Right ventricle myocardium inferior (tissue), 1 donor: ENCODE measurements at regions of chr4 and their contacts with region 1.

Region 1: DNA sequence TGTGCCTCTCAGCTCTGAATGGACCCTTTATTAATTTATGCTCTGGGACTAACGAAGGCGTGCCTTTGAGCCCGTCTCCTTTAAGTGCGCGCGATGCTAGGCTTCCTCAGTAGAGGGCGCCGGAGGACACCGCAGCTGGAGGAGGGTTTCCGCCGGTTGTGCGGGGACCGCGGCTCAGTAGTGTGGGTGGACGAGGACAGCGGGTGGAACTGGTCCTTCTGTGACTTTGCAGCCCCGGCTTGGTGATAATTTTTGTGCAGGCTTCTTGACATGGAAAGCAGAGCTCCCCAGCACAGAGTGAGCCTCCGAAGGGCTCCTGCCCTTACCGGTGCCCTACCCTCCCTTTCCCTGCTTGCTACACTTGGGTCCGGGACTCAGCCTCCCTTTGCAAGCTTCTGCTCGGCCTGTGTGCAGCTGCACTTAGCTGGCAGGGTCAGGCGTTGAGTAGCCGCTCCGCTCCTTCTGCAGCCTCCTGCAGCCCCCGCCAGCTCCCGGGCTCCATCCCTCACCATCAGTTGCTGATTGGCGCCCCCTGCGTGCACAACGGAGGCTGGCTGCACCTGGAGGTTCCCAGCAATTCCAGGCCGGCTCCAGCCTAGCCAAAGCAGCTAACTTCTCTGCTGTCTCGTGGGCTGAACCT is 26.8 kb upstream of the BOD1L1 start:
- DNase-seq: peak; percentile 92
- ATAC-seq: peak; percentile 94

Region 2: DNA sequence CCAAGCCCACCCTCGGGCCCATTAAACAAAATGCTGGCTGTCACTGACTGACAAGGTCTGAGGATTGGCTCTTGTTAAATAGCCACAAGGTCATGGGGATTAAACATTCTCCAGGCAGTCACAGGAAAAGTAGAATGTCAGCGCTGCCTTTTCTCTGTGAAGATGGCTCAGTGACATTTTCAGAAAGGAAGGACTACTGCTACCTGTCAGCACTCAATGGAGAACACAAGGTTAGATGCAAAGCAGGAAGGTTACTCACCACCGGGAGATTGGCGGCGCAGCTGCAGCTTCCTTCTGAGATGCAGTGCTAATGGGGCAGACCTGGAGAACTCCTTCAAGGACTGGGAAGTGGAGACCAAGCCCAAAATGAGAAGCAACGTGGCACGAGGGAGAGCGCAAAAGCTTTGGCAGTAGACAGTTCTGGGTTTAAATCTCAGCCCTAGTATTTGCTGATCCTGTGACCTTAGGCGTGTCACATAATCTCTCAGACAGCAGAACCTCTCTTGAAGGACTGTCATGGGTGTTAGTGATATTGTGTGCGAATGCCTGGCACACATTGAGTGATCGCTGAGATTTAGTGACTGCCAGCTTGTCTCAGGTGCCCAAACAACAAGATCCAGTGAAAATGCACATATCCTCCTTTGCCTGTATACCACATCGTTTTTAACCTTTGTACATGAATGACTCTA is 186.4 kb after region 1 on chr4:
- intact Hi-C with region 1: loop called (anchors 5 kb)
- DNase-seq: no peak
- ATAC-seq: peak; percentile 74

Region 3: DNA sequence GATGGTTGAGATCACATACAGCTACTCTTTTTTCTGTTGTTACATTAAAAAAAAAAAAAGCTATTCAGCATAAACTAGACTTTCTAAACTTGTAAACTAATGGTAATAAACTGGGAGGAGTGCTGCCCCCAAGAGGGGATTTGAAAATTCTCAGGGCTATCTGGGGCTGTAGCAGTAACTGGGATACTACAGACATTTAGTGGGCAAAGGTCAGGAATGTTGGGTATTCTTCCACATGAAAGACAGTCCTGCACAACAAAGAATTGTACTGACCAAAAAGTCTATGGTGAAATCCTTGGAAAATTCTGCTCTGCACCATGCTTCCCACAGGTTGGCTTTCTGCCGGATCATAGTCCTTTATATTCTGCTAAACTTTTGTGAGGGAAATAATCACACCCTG is 205.8 kb after region 1 on chr4:
- intact Hi-C with region 1: loop called (anchors 2 kb)
- DNase-seq: no peak
- ATAC-seq: no peak

Region 4: DNA sequence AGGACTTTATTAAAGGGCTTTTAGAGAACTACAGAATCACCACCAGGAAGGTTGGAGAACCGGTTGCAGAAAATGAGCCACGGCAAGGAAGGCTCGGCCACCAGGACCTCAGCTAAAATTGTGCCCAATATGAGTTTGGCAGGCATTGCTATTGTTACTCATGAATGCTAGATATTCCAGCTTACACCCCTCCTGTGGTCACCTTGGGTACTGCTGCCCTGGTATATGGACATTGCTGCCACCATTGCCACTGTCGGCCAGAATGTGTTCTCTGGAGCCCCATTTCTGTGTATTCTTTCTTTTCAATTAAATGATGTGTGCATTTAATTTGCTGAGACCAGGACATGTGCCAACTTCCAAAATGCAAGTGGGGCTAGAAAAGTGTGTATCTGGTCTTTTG is 600.0 kb after region 1 on chr4:
- intact Hi-C with region 1: loop called (anchors 10 kb)
- DNase-seq: no peak
- ATAC-seq: no peak